ENCODE measurements at regions of chr14 and their contacts with region 1.

Region 1: GRCh38 chr14:91252871-91253794 is 8.6 kb upstream of the GPR68 start:
- DNase-seq: peak in 11 of 35 experiments; percentile 24 to 68 (median 49)
- ATAC-seq: peak; percentile 26 to 52 (median 36)
- H3K4me3 ChIP-seq: peak overlapping the region; percentile 46 to 52
- H3K4me3 Mint-ChIP-seq: peak overlapping the region; percentile 72 to 89 (median 77)
- H3K27ac ChIP-seq: peak overlapping the region; percentile 88
- H3K27ac Mint-ChIP-seq: peak overlapping the region; percentile 76 to 83
- H3K4me1 ChIP-seq: peaks cover 41 to 87% of the 10 kb centered on the region in 2 experiments
- H3K4me1 Mint-ChIP-seq: peaks cover 77 to 83% (median 81%) of the 10 kb centered on the region in 3 donors
- H3K27me3 ChIP-seq: no peaks in the 10 kb centered on the region
- H3K27me3 Mint-ChIP-seq: no peaks in the 10 kb centered on the region

Region 2: DNA sequence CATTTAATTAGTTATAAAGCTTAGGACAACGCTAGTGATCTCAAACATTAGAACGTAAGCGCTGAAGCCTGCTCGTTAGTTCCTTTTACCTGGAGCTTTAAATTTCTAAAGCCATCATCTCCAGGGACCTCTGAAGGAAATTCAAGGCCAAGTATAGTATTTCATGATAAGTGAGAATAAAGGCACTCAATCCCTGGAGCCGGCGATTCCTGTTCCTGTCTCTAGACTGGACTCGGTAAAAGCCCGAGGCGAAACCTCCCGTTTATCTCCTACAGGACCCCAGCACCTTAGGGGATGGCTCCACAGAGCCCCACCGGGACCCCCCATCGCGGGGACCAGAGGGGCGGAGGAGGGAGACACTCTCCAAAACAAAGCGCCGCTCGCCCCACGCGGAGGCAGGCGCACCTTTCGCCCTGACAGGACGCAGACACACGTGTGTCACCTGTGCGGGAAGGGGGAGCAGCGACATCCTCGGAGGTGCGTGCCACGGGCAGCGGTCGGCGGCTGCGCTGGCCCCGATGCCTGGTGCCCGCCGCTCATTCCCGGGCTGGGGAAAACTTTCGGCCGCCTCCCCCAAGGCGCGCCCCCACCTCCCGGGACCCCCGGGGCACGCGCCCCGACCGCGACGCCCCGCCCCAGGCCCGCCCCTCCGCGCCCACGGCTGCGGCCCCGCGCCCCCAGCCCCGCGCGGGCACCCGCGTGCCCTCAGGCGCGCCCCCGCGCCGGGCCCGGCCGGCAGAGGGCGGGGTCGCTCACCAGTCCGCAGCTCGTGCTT is 193.4 kb before region 1 on chr14:
- CTCF ChIA-PET with region 1: no interaction called
- POLR2A ChIA-PET with region 1: no interaction called
- DNase-seq: peak; percentile 30 to 75 (median 52)
- ATAC-seq: peak; percentile 8 to 30 (median 19)
- H3K4me3 ChIP-seq: peak overlapping the region; percentile 79 to 80
- H3K4me3 Mint-ChIP-seq: peak overlapping the region in 2 of 3 donors; percentile 83 to 88
- H3K27ac ChIP-seq: peak overlapping the region; percentile 87
- H3K27ac Mint-ChIP-seq: peak overlapping the region; percentile 49 to 58
- H3K4me1 ChIP-seq: peaks cover 38 to 41% of the 10 kb centered on the region in 2 experiments
- H3K4me1 Mint-ChIP-seq: peaks cover 58 to 65% (median 63%) of the 10 kb centered on the region in 3 donors
- H3K27me3 ChIP-seq: no peaks in the 10 kb centered on the region
- H3K27me3 Mint-ChIP-seq: no peaks in the 10 kb centered on the region

Region 3: DNA sequence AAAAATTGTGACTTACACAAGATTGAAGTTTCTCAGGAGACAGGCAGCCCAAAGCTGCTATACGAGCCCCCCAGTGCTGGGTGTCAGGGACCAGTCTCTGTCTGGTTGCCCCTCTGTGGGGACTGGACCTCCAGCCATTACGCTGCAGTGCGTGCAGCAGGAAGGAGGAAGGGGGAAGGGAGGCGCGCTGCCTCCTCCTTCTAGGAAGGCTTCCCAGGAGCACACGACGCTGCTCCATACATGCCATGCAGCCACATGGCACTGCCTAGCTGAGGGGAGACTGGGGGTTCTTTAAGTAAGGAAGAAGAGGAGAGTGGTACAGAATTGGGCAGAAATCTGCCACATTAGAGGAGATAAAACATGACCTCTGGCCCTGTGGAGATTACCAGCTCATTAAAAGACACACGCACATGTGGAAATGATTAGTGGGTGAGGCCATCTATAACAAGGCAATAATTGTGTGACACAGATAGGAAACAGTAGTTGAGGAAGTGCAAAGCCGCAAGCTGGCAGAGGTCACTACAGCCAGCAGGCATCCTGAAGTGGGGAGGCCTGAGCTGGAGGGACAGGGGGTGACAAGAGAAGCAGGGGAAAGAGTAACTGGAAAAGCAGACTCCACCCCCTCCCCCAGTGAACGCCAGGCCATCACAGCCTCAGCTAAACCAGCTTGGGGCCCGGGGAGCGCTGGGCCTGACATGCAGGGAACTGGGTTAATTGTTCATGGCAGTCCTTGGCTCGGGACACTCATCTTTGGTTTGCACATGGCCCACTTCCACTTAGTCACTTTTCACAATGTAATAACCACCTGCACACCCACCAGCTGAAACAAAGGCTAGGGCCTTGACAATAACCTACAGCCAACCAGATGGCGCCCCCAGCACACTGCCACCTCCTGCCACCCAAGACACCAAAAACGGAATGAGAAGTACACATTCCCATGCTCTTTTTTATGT is 124.8 kb after region 1 on chr14:
- CTCF ChIA-PET with region 1: no interaction called
- POLR2A ChIA-PET with region 1: no interaction called
- DNase-seq: peak in 1 of 35 experiments; percentile 57
- ATAC-seq: no peak
- H3K4me3 ChIP-seq: peak overlapping the region in 1 of 2 donors; percentile 11
- H3K4me3 Mint-ChIP-seq: peak overlapping the region; percentile 35 to 84 (median 59)
- H3K27ac ChIP-seq: peak overlapping the region; percentile 87
- H3K27ac Mint-ChIP-seq: peak overlapping the region; percentile 92 to 95
- H3K4me1 ChIP-seq: peaks cover 47 to 98% of the 10 kb centered on the region in 2 experiments
- H3K4me1 Mint-ChIP-seq: peaks cover 99 to 100% (median 100%) of the 10 kb centered on the region in 3 donors
- H3K27me3 ChIP-seq: no peaks in the 10 kb centered on the region
- H3K27me3 Mint-ChIP-seq: no peaks in the 10 kb centered on the region

Region 4: GRCh38 chr14:92049781-92050180 is 796.6 kb after region 1 on chr14:
- CTCF ChIA-PET with region 1: no interaction called
- POLR2A ChIA-PET with region 1: interaction called in 1 of 2 experiments, 12 read pairs
- DNase-seq: no peak
- ATAC-seq: no peak
- H3K4me3 ChIP-seq: no peak overlapping the region
- H3K4me3 Mint-ChIP-seq: no peak overlapping the region
- H3K27ac ChIP-seq: no peak overlapping the region
- H3K27ac Mint-ChIP-seq: no peak overlapping the region
- H3K4me1 ChIP-seq: no peaks in the 10 kb centered on the region
- H3K4me1 Mint-ChIP-seq: peaks cover 0 to 4% (median 0%) of the 10 kb centered on the region in 3 donors
- H3K27me3 ChIP-seq: no peaks in the 10 kb centered on the region
- H3K27me3 Mint-ChIP-seq: no peaks in the 10 kb centered on the region